GM10248 (cell line): ENCODE measurements at regions of chr5 and their contacts with region 1.

Region 1: GRCh38 chr5:177403792-177404640 is 3.6 kb upstream of the PFN3 start:
- DNase-seq: peak; percentile 93
- CTCF ChIP-seq: peak; percentile 92

Region 2: DNA sequence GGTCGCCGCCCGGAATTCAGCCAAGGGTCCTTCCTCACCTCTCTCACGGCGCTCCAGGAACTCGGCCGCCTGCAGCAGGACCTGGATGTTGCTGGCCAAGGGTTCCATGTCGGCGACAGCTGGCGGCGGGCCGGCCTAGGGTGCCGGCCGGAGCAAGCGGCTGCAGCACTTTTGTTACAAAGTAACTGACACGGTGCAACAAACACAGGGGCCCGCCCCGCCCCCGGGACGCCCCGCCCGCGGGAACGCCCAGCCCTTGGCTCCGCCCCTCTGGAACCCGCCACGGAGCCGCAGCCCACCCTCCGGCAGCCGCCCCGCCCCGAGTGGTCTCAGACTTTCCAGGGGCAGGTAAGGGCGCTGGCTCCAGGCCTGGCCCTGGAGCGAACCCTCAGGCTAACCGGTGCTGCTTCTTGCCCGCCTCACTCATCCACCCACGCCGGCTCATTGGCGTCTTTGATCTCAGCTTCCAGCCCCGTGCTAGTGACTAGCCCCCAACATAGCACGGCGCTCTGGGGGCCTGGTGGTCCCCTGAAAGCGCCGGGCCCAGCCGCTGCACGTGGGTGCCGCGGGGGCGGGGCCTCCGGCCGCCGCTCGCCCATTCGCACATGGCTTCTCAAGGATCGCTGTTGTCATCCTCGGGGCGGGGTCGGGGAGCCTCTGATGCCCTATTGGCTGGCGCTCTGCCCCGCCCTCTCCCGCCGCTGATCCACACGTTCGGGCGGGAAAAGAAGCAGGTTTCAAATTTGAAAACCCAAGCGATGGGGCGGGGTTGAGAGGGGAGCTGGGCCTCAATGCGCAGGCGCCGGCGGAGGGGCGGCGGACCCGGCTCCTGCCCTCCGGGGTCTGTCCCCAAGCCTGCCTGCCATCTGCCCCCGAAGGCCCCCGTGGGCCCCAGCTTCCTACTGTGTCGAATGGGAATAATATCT is 92.0 kb before region 1 on chr5 and contains the start of gene MXD3:
- CTCF ChIA-PET with region 1: interaction called, 39 read pairs
- POLR2A ChIA-PET with region 1: no interaction called
- DNase-seq: peak; percentile 98
- CTCF ChIP-seq: no peak

Region 3: GRCh38 chr5:177370488-177371119 is 33.4 kb before region 1 on chr5:
- CTCF ChIA-PET with region 1: interaction called, 55 read pairs
- POLR2A ChIA-PET with region 1: no interaction called
- DNase-seq: peak; percentile 76
- CTCF ChIP-seq: peak; percentile 44

Region 4: GRCh38 chr5:177425801-177426565 is 22.0 kb after region 1 on chr5:
- CTCF ChIA-PET with region 1: interaction called, 347 read pairs
- POLR2A ChIA-PET with region 1: interaction called, 7 read pairs
- DNase-seq: peak; percentile 97
- CTCF ChIP-seq: no peak

Region 5: DNA sequence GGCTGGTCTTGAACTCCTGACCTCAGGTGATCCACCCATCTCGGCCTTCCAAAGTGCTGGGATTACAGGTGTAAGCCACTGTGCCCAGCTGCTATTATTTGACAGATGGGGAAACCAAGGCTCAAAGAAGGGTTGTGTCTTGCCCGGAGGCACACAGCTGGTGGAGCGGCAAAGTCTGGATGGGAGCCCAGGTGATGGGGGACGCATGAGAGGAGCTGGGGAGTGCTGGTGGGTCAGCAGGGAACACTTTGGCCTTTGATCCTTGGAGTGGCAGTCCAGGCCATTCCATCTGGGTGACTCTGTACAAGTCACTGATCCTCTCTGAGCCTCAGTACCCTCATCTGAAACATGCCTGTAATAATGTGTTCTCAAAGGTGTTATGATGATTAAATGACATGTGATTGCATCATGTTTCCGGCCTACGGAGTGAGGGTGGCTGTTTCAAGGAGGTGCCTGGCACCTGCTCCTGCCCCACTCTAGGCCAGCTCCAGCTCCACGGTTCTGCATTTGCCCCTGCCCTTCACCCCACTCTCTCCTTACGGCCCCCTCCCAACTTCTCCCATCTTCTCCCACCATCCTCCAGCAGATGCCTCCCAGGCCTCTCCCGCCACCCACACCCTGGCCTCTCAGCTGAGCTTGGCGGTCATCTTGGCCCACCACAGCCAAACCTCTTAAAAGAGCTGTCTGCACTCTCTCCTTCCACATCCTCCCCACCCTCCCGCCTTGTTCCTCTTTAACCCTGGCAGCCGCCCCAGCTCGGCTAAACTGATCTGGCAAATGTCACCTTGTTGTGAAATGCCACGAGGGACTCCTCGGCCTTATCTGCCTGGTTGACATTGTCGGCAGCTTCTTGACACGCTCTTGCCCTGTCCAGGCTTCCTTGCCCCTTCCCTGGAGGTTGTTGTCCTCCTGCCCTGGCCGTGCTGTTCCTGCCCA is 75.0 kb after region 1 on chr5:
- CTCF ChIA-PET with region 1: interaction called, 18 read pairs
- POLR2A ChIA-PET with region 1: no interaction called
- DNase-seq: peak; percentile 35
- CTCF ChIP-seq: no peak

Region 6: DNA sequence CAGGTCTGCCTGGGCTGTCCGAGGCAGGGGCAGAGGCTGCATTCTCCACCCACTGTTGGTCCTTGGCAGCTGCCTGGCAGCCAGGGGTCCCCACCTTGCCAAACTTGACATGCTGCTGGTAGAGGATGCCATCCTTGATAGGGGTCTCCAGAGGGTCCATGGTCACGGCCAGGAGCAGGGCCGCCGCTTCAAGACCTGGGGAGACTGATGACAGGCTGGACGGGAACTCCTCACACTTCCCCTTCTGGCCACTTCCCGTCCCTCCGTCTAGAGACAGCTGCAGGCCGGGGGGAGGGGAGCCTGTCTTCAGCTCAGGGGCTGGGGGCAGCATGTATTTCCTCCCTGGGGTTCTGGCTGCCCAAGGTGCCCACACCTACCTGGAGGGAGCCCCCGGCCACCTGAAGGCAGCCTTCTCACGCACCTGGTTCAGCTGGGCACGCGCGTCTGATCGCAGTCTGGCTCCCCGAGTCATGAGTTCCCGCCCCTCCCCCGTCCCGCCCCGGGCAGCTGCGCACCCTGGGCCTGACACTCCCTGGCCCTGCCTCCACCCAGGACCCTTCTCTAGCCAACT is 105.5 kb after region 1 on chr5 and contains the start of gene DOK3:
- CTCF ChIA-PET with region 1: interaction called, 27 read pairs
- POLR2A ChIA-PET with region 1: no interaction called
- DNase-seq: peak; percentile 66
- CTCF ChIP-seq: no peak

Region 7: DNA sequence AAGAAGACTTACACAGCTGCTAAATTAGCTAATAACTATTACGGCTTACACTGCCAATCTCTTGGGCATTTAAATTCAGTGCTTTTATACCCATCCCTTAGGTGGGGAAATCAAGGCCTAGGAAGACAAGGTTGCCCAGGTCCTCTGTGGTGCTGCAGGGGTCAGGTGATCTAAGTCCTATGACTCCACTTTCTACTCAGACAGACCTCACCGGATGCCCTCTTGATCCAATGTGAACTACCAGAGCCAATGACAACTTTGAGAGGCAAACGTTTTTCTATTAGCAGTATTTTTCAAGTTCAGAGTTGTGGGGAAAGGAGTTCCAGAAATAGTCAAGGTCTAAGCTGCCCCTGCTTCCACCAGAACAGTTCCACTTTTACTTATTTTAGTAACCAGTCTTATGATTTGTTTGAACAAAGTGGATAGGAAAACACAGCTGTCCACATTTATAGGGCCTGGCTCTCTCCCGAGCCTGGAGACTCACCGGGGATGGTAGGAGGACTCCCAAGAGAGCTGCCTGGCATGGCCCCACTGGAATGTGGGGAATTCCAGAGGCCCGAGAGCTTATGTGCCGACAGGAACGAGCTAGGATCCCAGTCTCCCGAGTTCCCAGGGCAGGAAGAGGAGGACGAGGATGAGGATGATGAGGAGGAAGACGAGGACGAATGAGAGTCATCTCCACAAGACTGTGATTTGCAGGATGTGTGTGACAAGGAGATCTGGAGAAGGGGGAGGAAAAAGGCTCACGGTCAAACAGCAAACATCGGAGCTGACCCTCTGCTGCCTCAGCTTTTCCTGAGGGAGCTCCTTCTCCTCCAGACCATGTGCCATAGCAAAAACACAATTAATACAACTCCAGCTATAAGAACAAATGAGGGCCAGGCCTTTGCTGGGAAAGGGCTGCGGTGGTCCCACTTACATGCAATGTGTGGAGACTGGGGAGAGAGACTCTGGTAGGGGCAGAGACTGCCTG is 133.7 kb after region 1 on chr5:
- CTCF ChIA-PET with region 1: no interaction called
- POLR2A ChIA-PET with region 1: no interaction called
- DNase-seq: no peak
- CTCF ChIP-seq: no peak